ENCODE measurements at regions of chr10 and their contacts with region 1.

Region 1: GRCh38 chr10:123154092-123154921 is at the start of gene BUB3:
- DNase-seq: peak; percentile 97
- ATAC-seq: peak; percentile 90
- H3K4me3 Mint-ChIP-seq: peak within 1 kb of the TSS; percentile 100
- H3K27ac Mint-ChIP-seq: peak within 1 kb of the TSS; percentile 100
- H3K4me1 Mint-ChIP-seq: peaks cover 73% of the 10 kb centered on the region
- H3K27me3 Mint-ChIP-seq: peaks cover 8% of the 10 kb centered on the region
- total RNA-seq, gene BUB3: 230 to 242 TPM

Region 2: GRCh38 chr10:122374237-122374869 is 780.0 kb before region 1 on chr10 and contains the start of gene PLEKHA1:
- CTCF ChIA-PET with region 1: no interaction called
- POLR2A ChIA-PET with region 1: no interaction called
- intact Hi-C with region 1: loop called in 1 of 2 experiments (anchors 1 kb)
- DNase-seq: peak; percentile 96
- ATAC-seq: peak; percentile 93
- H3K4me3 Mint-ChIP-seq: peak within 1 kb of the TSS; percentile 87
- H3K27ac Mint-ChIP-seq: peak within 1 kb of the TSS; percentile 94
- H3K4me1 Mint-ChIP-seq: peaks cover 38% of the 10 kb centered on the region
- H3K27me3 Mint-ChIP-seq: peaks cover 2% of the 10 kb centered on the region
- total RNA-seq, gene PLEKHA1: 7.7 to 11.7 TPM

Region 3: DNA sequence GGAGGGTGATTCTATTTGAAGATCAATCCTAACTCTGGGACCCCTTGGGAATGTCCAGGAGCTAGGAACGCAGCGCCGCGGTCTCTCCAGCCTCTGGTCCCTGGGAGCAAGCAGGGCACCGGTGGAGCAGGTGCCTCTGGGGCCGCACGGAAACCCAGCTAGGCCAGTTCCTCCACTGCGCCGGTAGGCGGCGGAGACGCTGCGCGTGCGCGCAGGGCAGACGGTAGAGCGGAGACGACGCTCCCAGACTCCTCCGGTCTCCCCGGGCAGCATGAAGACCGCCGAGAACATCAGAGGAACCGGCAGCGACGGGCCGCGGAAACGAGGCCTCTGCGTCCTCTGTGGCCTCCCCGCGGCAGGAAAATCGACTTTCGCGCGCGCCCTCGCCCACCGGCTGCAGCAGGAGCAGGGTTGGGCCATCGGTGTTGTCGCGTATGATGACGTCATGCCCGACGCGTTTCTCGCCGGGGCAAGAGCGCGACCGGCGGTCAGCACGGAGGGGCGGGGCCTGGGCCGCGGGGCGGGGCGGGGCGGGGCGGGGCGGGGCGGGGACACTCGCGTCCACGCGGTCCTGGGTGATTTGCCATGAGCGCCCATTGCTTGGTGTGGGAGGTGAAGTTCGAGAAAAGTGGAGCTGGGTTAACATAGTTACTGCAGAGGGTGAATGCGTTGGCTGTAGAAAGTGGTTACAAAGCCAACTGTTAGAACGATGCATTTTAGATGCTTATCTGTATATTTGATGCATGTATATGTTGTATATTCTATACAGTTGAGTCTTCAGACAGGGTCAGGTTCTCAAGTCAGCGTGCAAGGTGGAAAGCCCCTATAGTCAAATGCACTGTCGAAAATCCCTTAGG is 173.9 kb before region 1 on chr10 and contains the start of gene PSTK:
- CTCF ChIA-PET with region 1: interaction called, 3 read pairs
- POLR2A ChIA-PET with region 1: no interaction called
- intact Hi-C with region 1: loop called in 1 of 2 experiments (anchors 1 kb)
- DNase-seq: peak; percentile 94
- ATAC-seq: peak; percentile 98
- H3K4me3 Mint-ChIP-seq: peak within 1 kb of the TSS; percentile 80
- H3K27ac Mint-ChIP-seq: peak within 1 kb of the TSS; percentile 94
- H3K4me1 Mint-ChIP-seq: peaks cover 18% of the 10 kb centered on the region
- H3K27me3 Mint-ChIP-seq: no peaks in the 10 kb centered on the region
- total RNA-seq, gene PSTK: 2.8 to 2.9 TPM

Region 4: DNA sequence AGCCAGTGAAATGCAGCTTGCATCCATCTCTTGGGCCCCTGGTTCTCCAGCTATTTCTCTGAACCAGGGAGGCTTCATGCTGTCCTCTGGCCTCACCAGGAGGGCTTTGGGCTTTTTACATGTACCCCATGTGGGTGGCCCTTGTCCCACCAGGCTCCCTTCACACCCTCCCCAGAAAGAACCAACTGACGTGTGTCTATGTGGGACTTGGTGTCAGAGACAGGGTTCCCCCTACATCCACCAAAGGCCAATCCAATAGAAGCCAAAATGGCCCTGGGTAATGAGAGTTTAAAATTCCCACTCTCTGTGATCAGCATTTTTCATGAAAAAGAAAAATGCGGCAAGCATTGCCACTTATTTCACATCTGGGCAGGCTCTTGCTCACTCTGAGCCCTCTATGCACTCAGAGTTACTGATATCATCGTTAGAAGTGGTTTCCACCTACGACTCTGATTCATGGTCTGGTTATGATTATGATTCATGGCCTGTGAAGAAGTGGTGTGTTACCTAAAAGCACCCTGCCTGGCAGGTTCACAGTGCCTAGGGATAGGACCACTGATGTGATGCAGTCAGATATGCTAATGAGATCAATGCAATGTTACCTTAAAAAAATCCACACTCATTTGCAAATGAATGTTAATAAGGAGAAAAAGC is 133.4 kb after region 1 on chr10:
- CTCF ChIA-PET with region 1: no interaction called
- POLR2A ChIA-PET with region 1: no interaction called
- intact Hi-C with region 1: loop called (anchors 1 to 5 kb)
- DNase-seq: peak; percentile 75
- ATAC-seq: peak; percentile 99
- H3K4me3 Mint-ChIP-seq: no peak overlapping the region
- H3K27ac Mint-ChIP-seq: peak overlapping the region; percentile 70
- H3K4me1 Mint-ChIP-seq: peaks cover 22% of the 10 kb centered on the region
- H3K27me3 Mint-ChIP-seq: peaks cover 3% of the 10 kb centered on the region

Region 5: DNA sequence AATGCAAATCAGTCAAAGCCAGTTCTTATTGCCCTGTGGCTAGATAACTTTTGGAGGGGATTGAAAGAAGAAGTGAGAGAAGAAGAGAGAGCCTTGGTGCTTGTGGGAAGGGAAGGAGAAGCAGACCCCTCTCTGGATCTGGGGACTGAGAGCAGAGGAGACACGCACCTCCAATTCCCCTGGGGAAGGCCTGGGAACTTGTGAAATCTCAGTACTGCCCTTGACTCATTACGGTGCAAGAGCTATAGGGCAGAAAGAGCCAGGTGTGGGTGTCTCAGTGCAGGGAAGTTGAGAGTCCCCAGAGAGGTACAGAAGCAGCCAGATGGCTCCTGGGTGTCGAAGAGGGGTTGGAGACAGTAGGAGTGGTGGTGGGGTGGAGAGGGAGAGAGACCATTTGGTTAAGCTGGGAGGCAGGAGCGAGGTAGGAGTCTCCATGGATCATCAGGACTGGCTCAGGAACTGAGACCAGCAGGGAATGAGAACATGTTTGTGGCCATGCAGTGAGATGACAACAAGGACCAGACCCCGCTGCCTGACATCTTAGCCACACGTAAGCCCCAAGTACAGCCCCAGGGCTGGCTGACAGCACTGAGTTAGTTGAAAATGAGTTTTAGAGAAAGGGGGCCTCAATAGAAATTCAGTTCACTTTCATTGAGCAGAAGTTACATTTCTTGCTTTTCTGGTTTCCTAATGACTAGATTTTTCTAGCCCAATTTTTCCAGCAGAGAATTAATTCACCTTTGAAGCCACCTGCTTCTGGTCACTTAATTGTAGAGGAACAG is 238.1 kb after region 1 on chr10:
- CTCF ChIA-PET with region 1: no interaction called
- POLR2A ChIA-PET with region 1: no interaction called
- intact Hi-C with region 1: no loop called
- DNase-seq: no peak
- ATAC-seq: no peak
- H3K4me3 Mint-ChIP-seq: no peak overlapping the region
- H3K27ac Mint-ChIP-seq: no peak overlapping the region
- H3K4me1 Mint-ChIP-seq: no peaks in the 10 kb centered on the region
- H3K27me3 Mint-ChIP-seq: no peaks in the 10 kb centered on the region

Region 6: GRCh38 chr10:124461438-124462347 is 1307.4 kb after region 1 on chr10 and contains the start of gene LHPP:
- CTCF ChIA-PET with region 1: no interaction called
- POLR2A ChIA-PET with region 1: no interaction called
- intact Hi-C with region 1: loop called in 1 of 2 experiments (anchors 1 kb)
- DNase-seq: peak; percentile 92
- ATAC-seq: peak; percentile 97
- H3K4me3 Mint-ChIP-seq: peak within 1 kb of the TSS; percentile 71
- H3K27ac Mint-ChIP-seq: peak within 1 kb of the TSS; percentile 96
- H3K4me1 Mint-ChIP-seq: peaks cover 25% of the 10 kb centered on the region
- H3K27me3 Mint-ChIP-seq: peaks cover 2% of the 10 kb centered on the region
- total RNA-seq, gene LHPP: 11.5 to 14.0 TPM

Region 7: GRCh38 chr10:124916585-124917427 is 1762.5 kb after region 1 on chr10:
- CTCF ChIA-PET with region 1: no interaction called
- POLR2A ChIA-PET with region 1: no interaction called
- intact Hi-C with region 1: loop called in 1 of 2 experiments (anchors 5 kb)
- DNase-seq: peak; percentile 99
- ATAC-seq: peak; percentile 95
- H3K4me3 Mint-ChIP-seq: peak overlapping the region; percentile 92
- H3K27ac Mint-ChIP-seq: peak overlapping the region; percentile 92
- H3K4me1 Mint-ChIP-seq: peaks cover 38% of the 10 kb centered on the region
- H3K27me3 Mint-ChIP-seq: no peaks in the 10 kb centered on the region